Activated naive CD4-positive, alpha-beta T cell treated with anti-CD3 and anti-CD28 coated beads for 36 hours (primary cell): ENCODE measurements at regions of chr3 and their contacts with region 1.

Region 1: GRCh38 chr3:117019082-117019713 is 309.6 kb downstream of the TUSC7 start:
- DNase-seq: peak; percentile 56
- H3K4me3 Mint-ChIP-seq: no peak overlapping the region
- H3K27ac Mint-ChIP-seq: no peak overlapping the region
- H3K4me1 Mint-ChIP-seq: no peaks in the 10 kb centered on the region
- H3K27me3 Mint-ChIP-seq: peaks cover 9% of the 10 kb centered on the region

Region 2: DNA sequence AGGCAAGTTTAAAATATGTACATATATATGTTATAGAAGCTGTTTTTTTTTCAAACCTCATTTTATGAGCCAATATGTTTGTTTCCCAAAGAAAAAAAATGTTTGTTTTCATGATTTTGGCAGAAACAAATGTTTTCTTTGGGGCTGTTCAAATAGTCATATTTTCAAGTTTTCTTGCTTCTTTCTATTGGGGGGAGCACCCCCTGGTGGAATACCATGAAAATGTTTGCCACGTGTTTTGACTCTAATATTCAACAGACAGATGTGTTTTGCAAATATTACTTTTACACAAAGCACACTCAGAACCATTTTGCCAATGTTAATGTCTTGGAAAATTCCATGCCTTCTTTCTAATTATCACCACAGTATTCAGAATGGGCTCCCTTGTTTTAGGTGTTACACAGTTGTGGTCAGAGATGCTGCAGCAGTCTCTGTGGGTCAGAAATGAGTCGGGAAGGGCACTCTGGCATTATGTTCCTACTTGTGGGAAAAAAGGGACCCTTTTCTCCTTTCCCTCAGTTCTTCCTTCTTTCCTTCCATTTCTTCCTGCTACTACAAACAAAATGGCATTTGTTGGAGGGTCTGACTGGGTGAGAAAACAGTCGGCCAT is 507.4 kb after region 1 on chr3:
- CTCF ChIA-PET with region 1: no interaction called
- intact Hi-C with region 1: loop called (anchors 1 kb)
- DNase-seq: no peak
- H3K4me3 Mint-ChIP-seq: no peak overlapping the region
- H3K27ac Mint-ChIP-seq: no peak overlapping the region
- H3K4me1 Mint-ChIP-seq: no peaks in the 10 kb centered on the region
- H3K27me3 Mint-ChIP-seq: no peaks in the 10 kb centered on the region

Region 3: DNA sequence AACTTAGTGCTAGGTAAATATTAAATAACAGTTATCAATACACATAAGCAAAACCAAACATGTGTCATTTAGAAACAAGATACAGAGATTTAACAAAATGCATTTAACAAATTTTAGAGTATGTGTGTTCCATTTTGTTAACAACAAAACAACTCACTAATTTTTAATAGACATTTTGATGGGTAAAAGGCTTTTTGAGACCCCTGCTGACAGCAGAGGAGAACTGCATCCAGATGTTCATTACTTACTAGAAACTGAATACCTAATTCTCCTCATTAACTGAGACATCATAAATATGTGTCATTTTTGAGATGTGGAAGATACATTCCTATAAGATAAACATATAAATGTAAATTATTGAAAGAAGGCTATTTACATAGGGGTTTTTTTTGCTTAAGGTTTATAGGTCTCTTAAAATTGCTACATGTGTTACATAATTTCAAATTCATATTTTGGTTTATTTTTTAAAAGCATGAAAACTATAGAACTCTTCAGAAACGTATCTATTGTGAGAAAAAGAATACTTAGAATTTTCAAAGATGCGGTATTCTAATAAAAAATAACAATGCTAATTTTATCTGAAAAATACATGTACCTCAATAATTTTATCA is 700.2 kb after region 1 on chr3:
- CTCF ChIA-PET with region 1: no interaction called
- intact Hi-C with region 1: loop called (anchors 2 kb)
- DNase-seq: no peak
- H3K4me3 Mint-ChIP-seq: no peak overlapping the region
- H3K27ac Mint-ChIP-seq: no peak overlapping the region
- H3K4me1 Mint-ChIP-seq: no peaks in the 10 kb centered on the region
- H3K27me3 Mint-ChIP-seq: peaks cover 2% of the 10 kb centered on the region

Region 4: DNA sequence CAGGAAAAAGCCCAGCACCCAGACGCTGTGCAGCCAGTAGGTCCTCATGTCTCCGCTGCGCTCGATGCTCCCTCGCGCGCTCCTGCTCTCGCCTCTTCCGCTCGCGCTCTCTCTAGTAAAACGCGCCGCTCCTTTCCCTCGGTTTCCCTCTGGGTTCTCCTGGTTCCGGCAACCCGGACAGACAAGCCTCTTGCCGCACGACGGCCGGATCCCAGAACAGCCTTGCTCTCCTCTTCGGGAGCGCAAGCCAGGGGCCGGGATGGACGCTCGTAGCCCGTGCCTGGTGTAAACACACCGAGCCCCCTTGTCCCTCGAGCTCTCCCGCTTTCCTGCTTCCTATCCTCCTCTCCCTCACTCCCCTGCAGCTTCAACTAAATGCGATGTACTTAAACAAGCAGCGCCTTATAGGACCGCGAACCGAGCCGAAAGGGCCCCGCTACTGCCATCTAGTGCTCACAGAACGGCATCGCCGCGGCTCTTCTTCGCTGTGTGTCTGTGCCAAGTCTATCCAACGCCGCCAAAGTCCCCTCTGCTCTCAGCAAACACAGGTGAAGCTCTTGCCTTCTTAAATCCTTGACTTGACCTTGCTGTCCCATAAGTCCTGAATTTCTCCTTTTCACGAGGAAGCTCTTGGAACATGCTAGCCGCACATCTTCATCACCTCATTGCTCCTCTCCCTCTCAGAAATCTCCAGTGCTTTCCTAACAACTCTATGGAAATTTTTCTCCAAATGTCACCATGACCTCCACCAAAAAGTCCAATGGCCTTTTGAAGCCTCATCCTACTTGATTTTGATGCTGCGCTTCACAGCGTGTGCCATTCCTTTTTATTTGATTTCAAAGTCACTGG is 978.2 kb after region 1 on chr3:
- CTCF ChIA-PET with region 1: no interaction called
- intact Hi-C with region 1: loop called (anchors 1 kb)
- DNase-seq: peak; percentile 62
- H3K4me3 Mint-ChIP-seq: no peak overlapping the region
- H3K27ac Mint-ChIP-seq: no peak overlapping the region
- H3K4me1 Mint-ChIP-seq: no peaks in the 10 kb centered on the region
- H3K27me3 Mint-ChIP-seq: peaks cover 11% of the 10 kb centered on the region

Region 5: DNA sequence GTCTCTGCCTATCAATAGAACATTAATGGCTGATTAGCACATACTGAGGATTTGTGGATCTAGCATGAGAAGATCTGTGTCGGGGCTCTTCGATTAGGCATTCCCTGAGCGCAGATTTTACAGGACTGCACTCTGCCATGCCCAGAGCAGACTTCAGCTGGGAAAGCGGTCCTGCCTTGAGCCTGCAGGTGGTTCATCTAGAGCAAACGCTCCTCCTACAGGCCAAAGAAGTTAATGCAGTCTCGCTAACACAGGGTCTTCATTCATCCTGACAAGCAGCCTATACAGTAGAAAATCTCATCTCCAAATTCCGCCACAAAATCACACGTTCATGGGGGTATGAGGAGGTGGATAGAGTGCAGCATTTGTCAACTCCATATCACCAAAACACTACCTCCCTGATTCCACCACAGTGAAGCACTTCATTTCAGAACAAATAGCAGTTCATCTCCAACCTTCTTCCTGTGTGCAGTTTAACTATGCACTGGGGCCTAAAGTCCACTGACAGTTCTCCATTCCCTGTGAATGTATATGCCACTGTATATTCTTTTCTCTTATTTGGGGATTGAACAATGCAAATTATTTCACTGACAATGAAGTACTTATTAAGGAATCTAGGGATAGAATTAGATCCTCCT is 1609.6 kb after region 1 on chr3:
- CTCF ChIA-PET with region 1: no interaction called
- intact Hi-C with region 1: loop called (anchors 2 kb)
- DNase-seq: peak; percentile 38
- H3K4me3 Mint-ChIP-seq: no peak overlapping the region
- H3K27ac Mint-ChIP-seq: no peak overlapping the region
- H3K4me1 Mint-ChIP-seq: no peaks in the 10 kb centered on the region
- H3K27me3 Mint-ChIP-seq: no peaks in the 10 kb centered on the region

Region 6: GRCh38 chr3:118817748-118818165 is 1798.6 kb after region 1 on chr3:
- CTCF ChIA-PET with region 1: no interaction called
- intact Hi-C with region 1: loop called (anchors 2 kb)
- DNase-seq: peak; percentile 59
- H3K4me3 Mint-ChIP-seq: no peak overlapping the region
- H3K27ac Mint-ChIP-seq: no peak overlapping the region
- H3K4me1 Mint-ChIP-seq: no peaks in the 10 kb centered on the region
- H3K27me3 Mint-ChIP-seq: peaks cover 3% of the 10 kb centered on the region